ENCODE measurements at regions of chr6 and their contacts with region 1.

Region 1: DNA sequence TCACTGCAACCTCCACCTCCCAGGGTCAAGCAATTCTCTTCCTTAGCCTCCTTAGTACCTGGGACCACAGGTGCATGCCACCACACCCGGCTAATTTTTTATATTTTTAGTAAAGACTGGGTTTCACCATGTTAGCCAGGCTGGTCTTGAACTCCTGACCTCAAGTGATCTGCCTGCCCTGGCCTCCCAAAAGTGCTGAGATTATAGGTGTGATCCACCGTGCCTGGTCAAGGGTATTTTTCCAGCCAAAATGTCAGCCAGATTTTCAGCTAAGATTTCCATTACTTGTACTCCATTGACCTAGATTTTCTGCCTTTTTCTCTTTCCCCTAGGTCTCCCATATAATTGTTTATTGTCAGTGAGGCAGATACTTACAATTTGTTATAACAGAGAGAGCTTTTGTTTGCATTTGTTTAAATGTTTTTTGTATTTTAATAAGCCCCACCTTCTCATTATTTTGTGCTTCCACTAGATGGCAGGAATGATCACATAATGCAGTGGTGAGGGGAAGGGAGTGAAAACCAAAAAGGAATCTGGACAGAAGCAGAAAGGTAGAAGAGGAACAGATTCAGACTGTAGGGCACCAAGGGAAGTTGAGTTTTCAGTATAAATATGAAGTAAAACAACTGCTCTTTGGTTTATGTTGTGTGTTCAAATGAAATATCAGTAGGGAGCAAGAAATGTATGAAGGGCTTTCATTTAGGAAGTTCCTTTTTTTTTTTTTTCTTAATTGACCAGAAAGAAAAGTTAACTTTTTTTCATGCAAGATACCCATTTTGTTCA is 29.7 kb downstream of the RPF2 start:
- DNase-seq: peak in 2 of 5 donors; percentile 19 to 33
- H3K4me3 ChIP-seq: no peak overlapping the region
- H3K4me3 Mint-ChIP-seq: no peak overlapping the region
- H3K27ac ChIP-seq: no peak overlapping the region
- H3K27ac Mint-ChIP-seq: peak overlapping the region in 2 of 8 donors; percentile 6 to 55
- H3K4me1 ChIP-seq: no peaks in the 10 kb centered on the region
- H3K4me1 Mint-ChIP-seq: peaks cover 4 to 5% (median 4%) of the 10 kb centered on the region in 3 donors
- H3K27me3 ChIP-seq: no peaks in the 10 kb centered on the region
- H3K27me3 Mint-ChIP-seq: no peaks in the 10 kb centered on the region

Region 2: DNA sequence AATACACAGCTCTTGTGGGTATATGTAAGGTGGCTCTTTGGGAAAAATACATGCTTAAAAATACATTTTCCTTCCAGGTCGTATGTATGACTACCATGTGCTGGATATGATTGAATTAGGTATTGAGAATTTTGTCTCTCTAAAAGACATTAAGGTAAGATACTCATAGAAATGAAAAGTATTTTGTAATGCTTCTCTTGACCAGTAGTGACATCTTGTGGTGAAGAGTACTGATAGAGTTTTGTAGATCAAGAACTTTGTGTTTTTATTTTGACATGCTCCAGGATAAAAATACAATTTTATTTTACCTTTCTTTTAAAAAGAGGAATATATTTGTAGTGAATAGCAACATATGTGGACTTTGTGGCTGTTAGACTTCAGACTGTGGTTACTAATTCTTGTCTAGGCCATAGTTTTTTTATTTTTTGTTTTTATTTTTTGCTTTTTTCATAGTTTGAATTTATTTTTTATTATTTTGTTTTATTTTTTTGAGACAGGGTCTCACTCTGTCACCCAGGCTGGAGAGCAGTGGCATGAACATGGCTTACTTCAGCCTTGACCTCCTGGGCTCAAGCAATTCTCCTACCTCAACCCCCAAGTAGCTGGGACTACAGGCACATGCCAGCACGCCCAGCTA is 11.8 kb before region 1 on chr6:
- CTCF ChIA-PET with region 1: interaction called, 14 read pairs
- POLR2A ChIA-PET with region 1: no interaction called
- DNase-seq: peak in 2 of 5 donors; percentile 24 to 25
- H3K4me3 ChIP-seq: no peak overlapping the region
- H3K4me3 Mint-ChIP-seq: no peak overlapping the region
- H3K27ac ChIP-seq: no peak overlapping the region
- H3K27ac Mint-ChIP-seq: peak overlapping the region in 4 of 8 donors; percentile 0 to 69 (median 12)
- H3K4me1 ChIP-seq: no peaks in the 10 kb centered on the region
- H3K4me1 Mint-ChIP-seq: peaks cover 0 to 4% (median 0%) of the 10 kb centered on the region in 3 donors
- H3K27me3 ChIP-seq: no peaks in the 10 kb centered on the region
- H3K27me3 Mint-ChIP-seq: no peaks in the 10 kb centered on the region

Region 3: DNA sequence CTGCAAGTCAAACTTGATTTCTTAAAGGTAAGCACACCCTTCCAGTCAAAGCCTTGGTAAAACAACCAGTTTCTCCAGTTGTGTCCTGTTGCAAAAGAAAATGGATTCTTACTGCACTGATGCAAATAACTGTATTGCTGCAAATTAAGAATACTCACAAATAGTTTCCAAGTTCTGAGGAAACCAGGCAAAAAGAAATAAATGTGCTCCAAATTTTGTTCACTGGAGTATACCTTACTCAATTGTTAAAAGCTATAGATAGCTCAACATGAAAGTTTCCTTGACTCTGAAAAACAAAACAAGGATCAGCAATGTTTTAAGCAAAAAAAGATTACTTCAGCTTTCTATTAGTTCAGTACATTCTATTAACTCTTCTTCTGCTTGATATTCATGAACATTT is 151.0 kb after region 1 on chr6:
- CTCF ChIA-PET with region 1: no interaction called
- POLR2A ChIA-PET with region 1: no interaction called
- DNase-seq: no peak
- H3K4me3 ChIP-seq: no peak overlapping the region
- H3K4me3 Mint-ChIP-seq: no peak overlapping the region
- H3K27ac ChIP-seq: no peak overlapping the region
- H3K27ac Mint-ChIP-seq: no peak overlapping the region
- H3K4me1 ChIP-seq: peaks cover under 1% of the 10 kb centered on the region
- H3K4me1 Mint-ChIP-seq: peaks cover 4 to 10% (median 6%) of the 10 kb centered on the region in 3 donors
- H3K27me3 ChIP-seq: no peaks in the 10 kb centered on the region
- H3K27me3 Mint-ChIP-seq: peaks cover 0 to 11% of the 10 kb centered on the region in 2 donors